Kidney (tissue), 22 donors: ENCODE measurements at regions of chr19 and their contacts with region 1.

Region 1: GRCh38 chr19:4909897-4910593 is 744 bp downstream of the UHRF1 start:
- DNase-seq: peak; percentile 92 to 98 (median 95)
- H3K4me3 ChIP-seq: peak overlapping the region; percentile 44 to 72 (median 59)
- H3K27ac ChIP-seq: no peak overlapping the region
- H3K4me1 ChIP-seq: peaks cover 0 to 15% (median 13%) of the 10 kb centered on the region in 3 donors
- H3K27me3 ChIP-seq: no peaks in the 10 kb centered on the region
- CTCF ChIP-seq: no peak

Region 2: DNA sequence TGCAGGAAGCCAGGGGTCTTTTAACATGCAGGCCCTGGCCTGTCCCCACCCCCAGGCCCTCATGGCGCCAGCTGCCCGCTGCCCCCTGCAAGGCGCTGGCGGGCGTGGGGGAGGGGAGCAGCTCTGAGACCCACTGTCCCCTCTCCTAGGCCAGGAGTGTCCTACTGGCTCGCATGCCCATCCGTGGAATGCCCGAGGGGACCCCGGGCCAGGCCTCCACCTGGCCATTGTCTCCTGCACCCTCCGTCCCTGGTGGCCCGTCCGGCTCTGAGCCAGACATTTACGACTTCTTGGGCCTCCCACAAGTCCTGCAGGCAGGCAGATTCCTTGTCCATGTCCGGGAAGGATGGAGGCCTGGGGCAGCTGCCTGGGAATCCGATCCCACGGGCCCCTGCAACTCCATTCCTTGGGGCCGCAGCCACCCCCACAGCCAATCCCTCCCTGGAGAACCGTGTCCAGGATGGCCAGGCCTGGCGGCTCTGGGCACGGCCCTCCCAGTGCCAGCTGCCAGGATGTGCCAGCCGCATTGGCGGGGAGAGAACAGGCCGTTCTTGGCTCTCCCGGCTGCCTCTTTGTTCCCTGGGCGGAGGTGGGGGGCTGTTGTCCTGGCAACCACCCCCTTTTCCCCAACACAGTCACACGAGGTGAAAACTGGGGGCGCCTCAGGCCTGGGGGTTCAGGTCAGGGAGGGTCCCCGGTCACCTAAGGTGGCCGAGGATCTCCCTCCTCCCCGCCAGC is 32.1 kb before region 1 on chr19:
- intact Hi-C with region 1: loop called (anchors 5 kb)
- DNase-seq: peak; percentile 64 to 80 (median 74)
- H3K4me3 ChIP-seq: no peak overlapping the region
- H3K27ac ChIP-seq: no peak overlapping the region
- H3K4me1 ChIP-seq: no peaks in the 10 kb centered on the region
- H3K27me3 ChIP-seq: no peaks in the 10 kb centered on the region
- CTCF ChIP-seq: no peak